WTC11 (cell line): ENCODE measurements at regions of chrX and their contacts with region 1.

Region 1: GRCh38 chrX:108699368-108699767 is 37.0 kb downstream of the IRS4 start:
- DNase-seq: no peak
- ATAC-seq: peak; percentile 78
- H3K4me3 Mint-ChIP-seq: no peak overlapping the region
- H3K27ac Mint-ChIP-seq: no peak overlapping the region
- H3K4me1 Mint-ChIP-seq: no peaks in the 10 kb centered on the region
- H3K27me3 Mint-ChIP-seq: no peaks in the 10 kb centered on the region; the same call in 1 of the 2 replicates
- CTCF ChIP-seq: no peak

Region 2: DNA sequence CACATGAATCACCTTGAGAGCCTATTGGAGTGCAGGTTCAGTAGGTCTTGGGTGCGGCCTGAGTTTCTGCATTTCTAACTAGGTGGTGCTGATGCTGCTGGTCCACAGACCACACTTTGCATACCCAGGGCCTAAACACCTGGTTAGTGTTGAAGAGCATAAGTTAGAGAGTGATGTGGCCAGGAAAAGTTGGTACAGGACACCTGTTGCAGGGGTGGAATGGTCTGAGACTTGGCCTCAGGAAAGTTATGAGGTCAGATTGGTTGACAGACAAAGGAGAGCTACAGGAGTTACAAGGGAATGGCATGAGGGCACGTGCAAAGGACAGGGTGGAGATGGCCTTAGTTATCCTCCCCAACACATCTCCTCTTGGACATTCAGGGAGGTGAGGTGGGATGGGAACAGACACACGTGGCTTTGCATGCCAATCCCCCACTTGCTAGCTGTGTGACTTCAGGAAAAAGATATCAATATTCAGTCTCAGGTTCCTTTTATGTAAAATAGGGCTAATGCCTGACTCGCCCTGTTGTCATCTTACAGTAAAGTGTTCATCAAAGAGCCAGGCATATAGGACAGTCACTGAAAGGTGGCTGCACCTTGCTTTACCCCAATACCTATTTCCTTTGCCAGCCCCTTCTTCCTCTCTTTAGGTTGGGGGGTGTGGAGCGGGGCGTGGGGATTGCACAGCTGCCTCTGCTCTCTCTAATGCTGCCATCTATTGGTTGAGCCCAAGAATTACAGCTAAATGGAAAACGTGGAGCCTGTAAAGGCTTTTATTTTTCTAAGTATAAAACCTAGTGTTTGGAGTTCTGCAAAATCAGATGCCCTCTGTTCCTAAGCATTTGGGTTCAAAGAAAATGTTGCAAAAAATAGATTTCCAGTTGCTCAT is 560.3 kb before region 1 on chrX:
- CTCF ChIA-PET with region 1: no interaction called
- POLR2A ChIA-PET with region 1: no interaction called
- DNase-seq: peak; percentile 15
- ATAC-seq: peak; percentile 76
- H3K4me3 Mint-ChIP-seq: no peak overlapping the region
- H3K27ac Mint-ChIP-seq: no peak overlapping the region
- H3K4me1 Mint-ChIP-seq: no peaks in the 10 kb centered on the region
- H3K27me3 Mint-ChIP-seq: no peaks in the 10 kb centered on the region; the same call in 1 of the 2 replicates
- CTCF ChIP-seq: no peak; the same call in 1 of the 2 replicates

Region 3: GRCh38 chrX:108726748-108727147 is 27.4 kb after region 1 on chrX:
- CTCF ChIA-PET with region 1: interaction called, 16 read pairs
- POLR2A ChIA-PET with region 1: no interaction called
- DNase-seq: no peak
- ATAC-seq: peak; percentile 62
- H3K4me3 Mint-ChIP-seq: no peak overlapping the region
- H3K27ac Mint-ChIP-seq: peak overlapping the region; percentile 90
- H3K4me1 Mint-ChIP-seq: peaks cover 67% of the 10 kb centered on the region
- H3K27me3 Mint-ChIP-seq: no peaks in the 10 kb centered on the region
- CTCF ChIP-seq: no peak

Region 4: GRCh38 chrX:108736509-108737479 is 37.4 kb after region 1 on chrX and contains the start of gene IRS4:
- CTCF ChIA-PET with region 1: interaction called, 41 read pairs
- POLR2A ChIA-PET with region 1: no interaction called
- DNase-seq: peak; percentile 84
- ATAC-seq: peak; percentile 80
- H3K4me3 Mint-ChIP-seq: peak within 1 kb of the TSS; percentile 78
- H3K27ac Mint-ChIP-seq: peak within 1 kb of the TSS; percentile 80
- H3K4me1 Mint-ChIP-seq: peaks cover 24% of the 10 kb centered on the region
- H3K27me3 Mint-ChIP-seq: peaks cover 32% of the 10 kb centered on the region
- CTCF ChIP-seq: no peak
- total RNA-seq, gene IRS4: 10.5 to 11.4 TPM (median 11.0 TPM) in 3 replicates